Activated CD8-positive, alpha-beta memory T cell treated with anti-CD3 and anti-CD28 coated beads, Interleukin-2, amount 10 ng/mL, durations not matched to agents 7 days and 5 days (primary cell): ENCODE measurements at regions of chr4 and their contacts with region 1.

Region 1: GRCh38 chr4:154551872-154552686 is 1.9 kb upstream of the PLRG1 start:
- DNase-seq: peak; percentile 83
- ATAC-seq: peak; percentile 32
- H3K4me3 Mint-ChIP-seq: no peak overlapping the region
- H3K27ac Mint-ChIP-seq: no peak overlapping the region
- H3K4me1 Mint-ChIP-seq: peaks cover 18% of the 10 kb centered on the region
- H3K27me3 Mint-ChIP-seq: no peaks in the 10 kb centered on the region

Region 2: DNA sequence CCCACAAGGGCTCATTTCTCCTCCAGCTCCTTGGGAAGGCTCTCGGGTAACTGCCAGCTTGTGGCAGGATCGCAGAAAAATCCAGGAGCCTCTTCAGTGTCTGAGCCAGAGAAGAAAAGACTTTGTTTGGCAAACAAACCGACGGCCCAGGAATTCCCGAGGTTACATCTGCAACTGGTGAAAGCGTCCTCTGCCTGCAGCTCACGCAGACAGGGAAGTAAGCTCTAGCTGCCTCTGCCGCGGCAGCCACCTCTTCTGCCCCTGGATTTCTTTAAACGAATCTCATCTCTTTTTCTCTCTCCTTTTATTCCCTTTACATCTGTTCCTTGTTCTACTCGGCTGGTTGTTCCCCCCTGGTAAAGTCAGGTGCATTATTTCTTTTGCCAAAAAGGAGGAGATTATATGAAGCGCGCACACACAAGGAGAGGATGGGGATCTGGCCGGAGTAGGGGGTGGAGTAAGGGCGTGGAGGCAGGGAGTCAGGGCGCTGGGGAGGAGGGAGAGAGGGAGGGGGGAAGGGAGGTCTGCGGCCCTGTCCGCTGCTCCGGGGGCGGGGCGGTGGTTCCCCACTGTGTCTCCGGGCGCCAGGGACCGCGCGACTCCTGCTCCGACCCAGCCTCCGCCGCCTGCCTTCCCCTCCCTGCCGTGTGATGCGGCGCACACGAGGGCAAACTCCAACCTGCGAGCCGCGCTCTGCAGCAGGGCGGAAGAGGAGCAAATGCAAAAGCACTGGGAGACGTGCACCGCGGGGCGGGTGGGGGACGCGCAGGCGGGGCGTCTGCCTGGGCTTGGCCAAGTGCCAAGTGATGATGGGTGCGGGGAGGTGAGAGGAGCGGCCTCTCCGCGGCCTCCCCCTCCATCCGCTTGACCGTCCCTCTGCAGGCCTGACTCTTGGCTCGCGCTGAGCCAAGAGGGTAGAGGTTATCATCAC is 60.5 kb before region 1 on chr4 and contains the start of gene DCHS2:
- CTCF ChIA-PET with region 1: no interaction called
- DNase-seq: no peak
- ATAC-seq: peak; percentile 63
- H3K4me3 Mint-ChIP-seq: peak within 1 kb of the TSS; percentile 40
- H3K27ac Mint-ChIP-seq: no peak within 1 kb of the TSS
- H3K4me1 Mint-ChIP-seq: peaks cover 21% of the 10 kb centered on the region
- H3K27me3 Mint-ChIP-seq: peaks cover 81% of the 10 kb centered on the region
- total RNA-seq, gene DCHS2: not detected

Region 3: DNA sequence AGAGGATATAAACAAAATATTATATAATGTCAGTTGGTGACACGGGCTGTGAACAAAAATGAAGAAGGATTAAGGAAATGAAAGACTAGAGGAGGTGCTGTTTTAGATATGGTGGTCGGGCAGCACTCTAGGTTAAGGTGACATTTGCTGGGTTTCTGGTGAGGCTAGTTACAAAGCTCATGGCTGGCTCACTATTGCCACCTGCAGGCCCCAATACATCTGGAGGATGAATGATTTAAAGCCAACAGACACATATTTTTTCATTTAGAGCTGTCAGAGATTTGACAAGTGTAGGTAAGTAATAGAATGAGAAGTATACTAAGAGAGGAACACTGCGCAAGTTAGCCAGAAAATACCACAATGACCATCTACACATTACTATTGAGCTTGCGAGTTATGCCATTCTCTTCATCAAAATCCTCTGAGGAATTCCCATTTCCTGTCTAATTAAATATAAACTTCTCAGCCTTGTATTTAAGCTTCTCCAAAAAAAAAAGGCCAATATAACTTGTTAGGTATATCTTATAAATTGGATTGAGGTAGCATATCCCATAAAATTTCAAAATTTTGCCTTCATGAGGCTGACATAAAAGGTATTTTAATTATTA is 66.7 kb after region 1 on chr4:
- CTCF ChIA-PET with region 1: interaction called, 57 read pairs
- DNase-seq: peak; percentile 75
- ATAC-seq: peak; percentile 82
- H3K4me3 Mint-ChIP-seq: no peak overlapping the region
- H3K27ac Mint-ChIP-seq: no peak overlapping the region
- H3K4me1 Mint-ChIP-seq: peaks cover 7% of the 10 kb centered on the region
- H3K27me3 Mint-ChIP-seq: peaks cover 4% of the 10 kb centered on the region

Region 4: DNA sequence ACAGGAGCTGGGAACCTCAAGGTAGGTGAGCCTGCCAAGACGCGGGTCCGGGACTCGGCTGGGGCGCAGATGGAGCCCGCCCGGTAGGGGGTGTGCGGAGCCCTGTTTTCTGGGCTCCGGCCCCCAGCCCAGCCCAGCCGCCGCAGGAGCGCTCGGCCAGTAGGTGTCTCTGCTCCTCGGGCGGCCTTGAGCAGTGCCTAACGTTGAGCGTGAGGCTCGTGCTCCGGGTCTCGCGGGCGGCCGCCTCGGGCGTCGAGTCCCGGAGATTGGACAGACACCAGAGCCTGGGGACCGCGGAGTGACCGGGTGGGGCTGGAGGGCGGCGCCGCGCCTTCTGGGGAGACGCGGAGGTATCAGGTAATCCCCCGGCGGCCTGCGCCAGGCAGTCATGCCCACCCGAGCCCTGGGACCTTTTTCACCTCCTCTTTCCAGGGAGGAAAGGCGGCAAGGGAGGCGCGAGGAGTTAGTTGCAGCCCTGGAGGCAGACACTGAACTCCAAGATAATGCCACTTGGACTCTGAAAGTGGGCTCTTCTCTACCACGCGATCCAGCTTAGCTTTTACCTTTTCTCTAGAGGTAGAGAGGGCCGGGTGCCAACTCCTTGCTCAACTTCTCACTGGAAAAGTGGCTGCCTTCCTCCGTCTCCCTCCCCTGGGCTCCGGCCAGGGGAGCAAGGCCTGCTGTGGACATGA is 74.9 kb after region 1 on chr4:
- CTCF ChIA-PET with region 1: interaction called, 57 read pairs
- DNase-seq: peak; percentile 61
- ATAC-seq: peak; percentile 90
- H3K4me3 Mint-ChIP-seq: no peak overlapping the region
- H3K27ac Mint-ChIP-seq: no peak overlapping the region
- H3K4me1 Mint-ChIP-seq: peaks cover 2% of the 10 kb centered on the region
- H3K27me3 Mint-ChIP-seq: peaks cover 28% of the 10 kb centered on the region

Region 5: GRCh38 chr4:155376387-155377268 is 824.5 kb after region 1 on chr4 and contains the start of gene MAP9:
- CTCF ChIA-PET with region 1: interaction called, 14 read pairs
- DNase-seq: peak; percentile 94
- ATAC-seq: peak; percentile 93
- H3K4me3 Mint-ChIP-seq: peak within 1 kb of the TSS; percentile 81
- H3K27ac Mint-ChIP-seq: peak within 1 kb of the TSS; percentile 85
- H3K4me1 Mint-ChIP-seq: peaks cover 16% of the 10 kb centered on the region
- H3K27me3 Mint-ChIP-seq: no peaks in the 10 kb centered on the region
- total RNA-seq, gene MAP9: 4.5 to 5.3 TPM